PC-3 (cell line): ENCODE measurements at regions of chr14 and their contacts with region 1.

Region 1: DNA sequence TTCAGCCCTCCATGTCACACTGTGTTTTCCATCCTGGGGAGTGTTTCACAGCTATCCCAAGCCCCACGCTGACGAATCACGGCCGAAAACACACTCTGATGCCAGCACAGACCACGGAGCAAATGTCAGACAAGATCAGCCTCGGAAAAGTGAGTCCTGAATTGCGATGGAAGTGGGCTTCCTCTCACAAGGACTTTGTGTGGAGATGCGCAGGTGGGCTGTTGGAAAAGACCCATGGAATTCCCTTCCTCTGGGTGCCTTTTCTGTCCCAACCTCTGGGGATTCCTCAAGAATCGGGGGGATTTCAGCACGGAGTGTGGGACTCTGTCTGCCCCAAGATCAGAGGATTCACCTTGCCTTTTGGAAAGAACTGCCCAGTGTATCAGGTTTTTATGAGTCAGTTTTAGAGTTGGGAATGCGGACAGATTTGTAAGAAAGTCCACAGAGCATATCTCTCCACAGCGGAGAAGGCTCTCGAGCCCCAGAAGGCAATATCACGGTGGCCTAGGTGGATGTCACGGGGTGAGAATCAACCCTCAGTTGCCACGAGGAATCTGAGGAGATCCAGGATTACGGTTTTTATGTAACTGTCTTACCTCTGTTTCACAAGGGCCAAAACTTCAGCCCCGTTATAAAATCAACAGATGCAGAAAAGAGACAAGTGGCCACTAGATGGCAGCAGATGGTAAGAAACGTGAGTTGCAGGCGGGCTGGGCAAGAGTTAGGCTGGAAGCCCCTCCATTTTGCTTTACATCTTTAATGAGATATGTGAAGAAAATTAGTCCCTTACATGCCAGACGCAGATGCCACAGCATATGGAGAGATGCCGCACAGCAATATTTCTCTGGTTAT is 201.9 kb downstream of the DAD1 start:
- DNase-seq: peak; percentile 88
- ATAC-seq: no peak
- H3K4me3 ChIP-seq: no peak overlapping the region
- H3K27ac ChIP-seq: no peak overlapping the region
- H3K4me1 ChIP-seq: peaks cover 46% of the 10 kb centered on the region
- H3K27me3 ChIP-seq: no peaks in the 10 kb centered on the region
- CTCF ChIP-seq: peak; percentile 91

Region 2: DNA sequence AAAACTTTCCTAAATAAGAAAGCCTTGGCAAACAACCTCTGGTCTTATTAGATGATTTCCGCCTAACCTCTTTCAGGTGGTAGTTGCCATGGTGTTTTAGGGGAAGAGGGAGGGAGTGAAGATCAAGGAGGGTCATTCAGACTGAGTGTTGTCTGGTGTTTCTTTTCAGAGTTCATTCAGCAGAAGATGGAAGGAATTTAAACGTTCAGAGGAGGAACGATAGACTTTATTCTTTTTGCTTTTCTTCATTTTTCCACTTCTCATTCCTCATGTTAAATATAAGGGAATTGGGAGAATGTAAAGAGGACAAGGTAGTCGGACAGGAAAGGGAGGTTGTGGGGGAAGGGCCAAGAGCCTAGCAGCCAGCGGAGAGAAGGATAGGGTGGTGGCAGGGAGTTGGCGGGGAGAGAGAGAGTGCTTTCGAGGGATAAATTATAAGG is 843.6 kb before region 1 on chr14:
- CTCF ChIA-PET with region 1: interaction called, 11 read pairs
- POLR2A ChIA-PET with region 1: no interaction called
- intact Hi-C with region 1: no loop called
- DNase-seq: no peak
- ATAC-seq: no peak
- H3K4me3 ChIP-seq: no peak overlapping the region
- H3K27ac ChIP-seq: no peak overlapping the region
- H3K4me1 ChIP-seq: no peaks in the 10 kb centered on the region
- H3K27me3 ChIP-seq: peaks cover 5% of the 10 kb centered on the region; the same call in 1 of the 2 replicates
- CTCF ChIP-seq: no peak

Region 3: DNA sequence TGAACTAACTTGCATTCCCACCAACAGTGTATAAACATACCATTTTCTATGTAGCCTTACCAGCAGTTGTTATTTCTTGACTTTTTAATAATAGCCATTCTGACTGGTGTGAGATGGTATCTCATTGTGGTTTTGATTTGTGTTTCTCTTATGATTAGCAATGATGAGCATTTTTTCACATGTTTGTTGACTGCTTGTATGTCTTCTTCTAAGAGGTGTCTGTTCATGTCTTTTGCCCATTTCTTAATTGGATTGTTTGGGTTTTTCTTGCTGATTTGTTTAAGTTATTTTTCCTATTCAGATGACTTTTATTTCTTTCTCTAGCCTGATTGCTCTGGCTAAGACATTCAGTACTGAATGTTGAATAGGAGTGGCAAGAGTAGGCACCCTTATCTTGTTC is 28.4 kb before region 1 on chr14:
- CTCF ChIA-PET with region 1: no interaction called
- POLR2A ChIA-PET with region 1: no interaction called
- intact Hi-C with region 1: no loop called
- DNase-seq: no peak
- ATAC-seq: no peak
- H3K4me3 ChIP-seq: no peak overlapping the region
- H3K27ac ChIP-seq: no peak overlapping the region
- H3K4me1 ChIP-seq: no peaks in the 10 kb centered on the region
- H3K27me3 ChIP-seq: no peaks in the 10 kb centered on the region
- CTCF ChIP-seq: no peak

Region 4: GRCh38 chr14:22370084-22370847 is 16.9 kb before region 1 on chr14:
- CTCF ChIA-PET with region 1: interaction called, 18 read pairs
- POLR2A ChIA-PET with region 1: no interaction called
- intact Hi-C with region 1: no loop called
- DNase-seq: peak; percentile 97
- ATAC-seq: peak; percentile 94
- H3K4me3 ChIP-seq: no peak overlapping the region
- H3K27ac ChIP-seq: peak overlapping the region; percentile 50
- H3K4me1 ChIP-seq: peaks cover 21% of the 10 kb centered on the region
- H3K27me3 ChIP-seq: no peaks in the 10 kb centered on the region
- CTCF ChIP-seq: no peak

Region 5: DNA sequence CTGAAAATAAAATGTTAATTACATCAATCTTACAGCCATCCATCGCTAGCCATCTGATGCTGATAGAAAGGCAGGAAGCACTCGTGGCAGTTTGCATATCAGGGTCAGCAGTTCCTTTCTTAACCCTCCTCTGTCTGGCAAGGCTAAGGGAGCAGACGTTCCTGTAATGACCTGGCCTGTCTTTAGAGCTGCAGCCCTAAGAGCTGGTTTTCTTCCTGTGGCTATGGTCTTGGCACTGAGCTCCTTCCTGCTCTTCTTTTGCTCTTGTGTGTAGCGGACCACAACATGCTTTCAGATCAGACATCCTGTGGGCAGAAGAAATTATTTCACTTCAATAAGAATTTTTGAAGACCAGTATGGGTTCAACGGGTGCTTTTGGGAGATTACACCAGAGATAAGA is 31.5 kb after region 1 on chr14:
- CTCF ChIA-PET with region 1: no interaction called
- POLR2A ChIA-PET with region 1: no interaction called
- intact Hi-C with region 1: no loop called
- DNase-seq: no peak
- ATAC-seq: no peak
- H3K4me3 ChIP-seq: no peak overlapping the region
- H3K27ac ChIP-seq: no peak overlapping the region
- H3K4me1 ChIP-seq: no peaks in the 10 kb centered on the region
- H3K27me3 ChIP-seq: no peaks in the 10 kb centered on the region
- CTCF ChIP-seq: no peak

Region 6: DNA sequence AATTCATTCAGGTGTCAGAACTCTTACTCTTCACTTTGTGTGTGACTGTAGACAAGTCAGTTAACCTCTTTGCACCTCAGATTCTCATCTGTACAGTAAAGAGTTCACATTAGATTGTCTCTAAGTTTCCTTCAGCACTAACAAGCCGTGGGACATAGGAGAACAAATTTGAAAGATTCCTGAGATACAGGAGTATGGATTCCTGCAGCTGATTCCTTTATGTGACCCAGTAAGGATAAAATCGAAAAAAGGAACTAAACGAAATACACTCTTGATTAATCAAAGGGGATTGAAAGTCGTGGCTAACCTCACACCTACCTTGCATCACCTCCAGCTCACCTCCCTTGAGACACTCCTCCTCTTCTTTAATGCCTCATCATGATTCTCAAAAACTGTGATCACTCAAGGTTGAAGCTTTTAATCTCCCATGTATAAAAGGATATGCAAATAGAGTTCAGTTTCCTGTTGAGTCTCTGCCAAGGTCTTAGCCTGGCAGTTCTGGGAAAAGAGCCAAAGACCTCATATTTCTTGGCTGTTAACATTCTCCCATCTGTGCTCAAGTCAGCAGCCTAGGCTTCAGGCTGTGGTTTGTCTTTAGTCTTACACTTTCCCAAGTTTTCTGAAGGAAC is 45.3 kb after region 1 on chr14:
- CTCF ChIA-PET with region 1: interaction called, 4 read pairs
- POLR2A ChIA-PET with region 1: no interaction called
- intact Hi-C with region 1: loop called (anchors 1 kb)
- DNase-seq: peak; percentile 97
- ATAC-seq: peak; percentile 93
- H3K4me3 ChIP-seq: no peak overlapping the region
- H3K27ac ChIP-seq: no peak overlapping the region
- H3K4me1 ChIP-seq: peaks cover 15% of the 10 kb centered on the region
- H3K27me3 ChIP-seq: no peaks in the 10 kb centered on the region
- CTCF ChIP-seq: no peak

Region 7: DNA sequence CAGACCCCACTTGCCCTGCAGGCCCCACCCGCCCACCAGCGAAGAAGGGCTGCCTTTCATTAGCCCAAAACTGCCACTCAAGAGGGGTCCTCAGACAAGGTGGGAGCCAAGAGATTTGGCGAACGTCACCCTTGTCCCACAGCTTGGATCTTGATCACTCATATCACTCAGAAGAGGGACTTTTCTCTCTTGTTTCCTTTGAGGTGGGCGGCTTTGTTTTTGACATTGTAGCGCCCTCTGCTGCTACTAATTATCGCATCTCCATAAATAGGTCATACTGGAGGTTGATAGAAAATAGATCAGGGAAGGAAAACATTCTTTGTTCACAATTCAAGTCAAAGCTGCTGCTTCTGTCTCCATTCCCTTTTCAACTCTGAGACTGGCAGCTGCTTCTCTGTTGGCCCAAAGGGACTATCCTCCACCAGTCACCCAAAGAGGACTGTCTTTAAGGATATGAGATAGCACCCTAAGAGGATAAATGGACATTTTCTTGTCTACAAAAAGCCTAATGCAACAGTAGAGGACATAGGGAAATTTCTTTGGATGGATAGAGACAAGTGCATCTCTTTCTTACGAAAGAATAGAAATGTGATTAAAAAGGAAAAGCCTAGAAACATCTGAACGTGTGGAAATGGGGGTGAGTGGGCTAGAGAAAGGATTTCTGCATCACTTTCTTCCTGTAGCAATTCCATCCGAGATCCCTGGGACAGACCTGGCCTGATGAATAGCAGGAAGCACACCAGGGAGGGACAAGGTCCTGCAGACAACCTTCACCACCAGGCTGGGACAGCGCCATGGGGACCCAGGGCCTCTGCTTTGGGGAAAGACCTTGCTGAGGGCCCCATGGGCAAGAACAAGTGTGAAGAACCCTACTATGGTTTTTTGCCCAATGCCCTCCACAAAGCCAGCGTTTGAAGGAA is 86.0 kb after region 1 on chr14:
- CTCF ChIA-PET with region 1: interaction called, 29 read pairs
- POLR2A ChIA-PET with region 1: no interaction called
- intact Hi-C with region 1: loop called (anchors 1 kb)
- DNase-seq: peak; percentile 72
- ATAC-seq: peak; percentile 54
- H3K4me3 ChIP-seq: no peak overlapping the region
- H3K27ac ChIP-seq: no peak overlapping the region
- H3K4me1 ChIP-seq: peaks cover 23% of the 10 kb centered on the region
- H3K27me3 ChIP-seq: no peaks in the 10 kb centered on the region
- CTCF ChIP-seq: peak; percentile 84

Region 8: DNA sequence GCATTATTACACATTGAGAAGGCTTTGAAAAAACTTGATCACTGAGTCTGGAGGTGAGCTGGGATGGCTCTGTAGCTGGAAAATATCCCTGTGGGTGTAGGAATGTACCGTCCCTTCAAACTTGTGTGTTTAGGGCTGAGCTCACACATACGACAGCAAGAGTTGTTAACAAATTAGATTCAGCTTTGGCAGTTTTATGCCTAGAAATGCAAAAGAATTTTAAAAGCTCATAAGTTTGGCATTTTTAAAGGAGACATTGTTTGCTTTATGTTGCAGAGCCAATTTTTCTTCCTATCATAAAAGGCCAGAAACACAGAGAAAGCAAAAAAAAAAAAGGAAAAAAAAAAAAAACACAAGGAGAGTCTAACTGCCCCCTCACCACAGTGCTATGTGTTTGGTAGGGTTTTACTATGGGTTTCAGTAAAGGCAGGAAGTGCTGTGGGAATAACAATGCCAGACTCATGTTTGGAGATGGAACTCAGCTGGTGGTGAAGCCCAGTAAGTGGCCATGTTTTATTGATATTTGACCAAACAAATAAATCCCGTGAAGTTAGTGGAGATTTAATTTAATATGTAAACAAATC is 123.5 kb after region 1 on chr14:
- CTCF ChIA-PET with region 1: no interaction called
- POLR2A ChIA-PET with region 1: interaction called, 20 read pairs
- intact Hi-C with region 1: no loop called
- DNase-seq: peak; percentile 35
- ATAC-seq: peak; percentile 91
- H3K4me3 ChIP-seq: no peak overlapping the region
- H3K27ac ChIP-seq: no peak overlapping the region
- H3K4me1 ChIP-seq: peaks cover 4% of the 10 kb centered on the region; the same call in 1 of the 2 replicates
- H3K27me3 ChIP-seq: no peaks in the 10 kb centered on the region
- CTCF ChIP-seq: no peak

Region 9: DNA sequence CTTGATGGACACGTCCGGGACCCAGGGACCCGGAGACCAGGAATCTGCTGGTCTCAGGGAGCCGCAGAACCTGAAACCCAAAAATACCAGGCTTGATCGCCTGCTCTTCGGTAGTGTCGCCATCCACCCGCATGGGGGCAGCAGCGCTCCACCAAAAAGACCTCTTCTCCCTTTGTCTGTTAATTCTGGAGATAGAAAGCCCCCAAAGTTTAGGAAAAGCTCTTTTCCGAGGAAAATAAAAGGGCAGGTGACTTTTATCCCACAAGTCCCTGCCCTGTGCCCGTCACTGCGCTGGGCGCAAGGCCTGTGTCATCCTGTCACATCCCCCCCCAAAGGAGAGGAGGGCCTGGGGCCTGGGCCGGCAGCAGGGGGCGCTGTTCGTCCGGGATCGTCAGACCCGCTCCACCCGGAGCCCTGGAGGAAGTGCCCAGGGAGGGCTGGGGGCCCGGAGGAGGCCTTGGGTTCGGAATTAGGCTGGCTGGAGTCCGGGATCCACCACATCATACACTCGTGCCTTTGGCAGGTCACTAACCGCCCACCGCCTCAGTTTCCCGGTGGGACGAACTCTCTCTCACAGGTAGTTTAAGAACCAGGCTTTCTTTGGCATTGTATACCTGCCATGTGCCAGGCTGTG is 170.0 kb after region 1 on chr14:
- CTCF ChIA-PET with region 1: interaction called, 6 read pairs
- POLR2A ChIA-PET with region 1: no interaction called
- intact Hi-C with region 1: loop called (anchors 2 kb)
- DNase-seq: peak; percentile 78
- ATAC-seq: peak; percentile 66
- H3K4me3 ChIP-seq: peak overlapping the region; percentile 57
- H3K27ac ChIP-seq: peak overlapping the region; percentile 94
- H3K4me1 ChIP-seq: peaks cover 51% of the 10 kb centered on the region
- H3K27me3 ChIP-seq: no peaks in the 10 kb centered on the region
- CTCF ChIP-seq: peak; percentile 99